Right cardiac atrium (tissue), 5 donors: ENCODE measurements at regions of chr3 and their contacts with region 1.

Region 1: DNA sequence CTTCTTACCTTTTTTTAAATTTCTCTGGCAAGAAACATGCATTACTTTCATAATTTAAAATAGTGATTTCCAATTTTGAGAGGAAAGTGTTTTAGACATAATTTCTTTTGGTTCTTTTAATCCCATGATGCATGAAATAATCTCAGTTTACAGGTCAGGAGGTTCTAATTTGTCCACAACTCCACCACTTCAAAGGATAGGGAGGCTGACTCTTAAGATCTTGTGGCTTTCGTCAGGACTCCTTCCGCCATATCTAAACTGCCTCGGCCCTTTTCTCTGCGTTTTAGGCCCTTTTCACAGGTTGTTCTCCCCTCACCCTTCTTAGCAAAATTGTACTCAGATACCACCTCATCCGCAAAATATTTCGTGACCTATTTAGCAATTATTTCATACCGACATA is 8.0 kb downstream of the DYNC1LI1 start:
- DNase-seq: no peak
- ATAC-seq: no peak
- H3K4me3 ChIP-seq: no peak overlapping the region
- H3K27ac ChIP-seq: no peak overlapping the region
- H3K4me1 ChIP-seq: no peaks in the 10 kb centered on the region
- H3K27me3 ChIP-seq: no peaks in the 10 kb centered on the region

Region 2: DNA sequence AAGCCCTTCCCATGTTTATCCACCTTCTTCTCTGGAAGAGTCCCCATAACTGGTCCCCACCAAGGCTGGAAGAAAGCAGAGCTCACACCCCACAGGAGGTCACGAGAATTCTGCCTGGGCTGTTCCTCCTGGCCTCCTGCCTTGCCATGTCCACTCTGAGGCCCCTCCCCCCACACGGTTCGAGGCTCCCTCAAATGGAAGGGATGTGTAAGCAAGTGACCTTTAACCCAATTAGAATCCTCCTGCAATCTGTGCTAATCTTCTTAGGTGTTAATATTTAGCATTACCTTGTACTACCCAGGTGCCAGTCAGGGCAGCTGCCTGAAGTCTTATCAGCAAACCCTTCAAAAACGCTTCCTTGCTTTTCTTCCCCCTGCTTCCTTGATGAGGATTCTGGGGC is 40.4 kb after region 1 on chr3:
- intact Hi-C with region 1: loop called in 1 of 4 experiments (anchors 2 kb)
- DNase-seq: no peak
- ATAC-seq: peak in 1 of 2 donors; percentile 29
- H3K4me3 ChIP-seq: no peak overlapping the region
- H3K27ac ChIP-seq: no peak overlapping the region
- H3K4me1 ChIP-seq: no peaks in the 10 kb centered on the region
- H3K27me3 ChIP-seq: no peaks in the 10 kb centered on the region